ENCODE measurements at regions of chr12 and their contacts with region 1.

Region 1: DNA sequence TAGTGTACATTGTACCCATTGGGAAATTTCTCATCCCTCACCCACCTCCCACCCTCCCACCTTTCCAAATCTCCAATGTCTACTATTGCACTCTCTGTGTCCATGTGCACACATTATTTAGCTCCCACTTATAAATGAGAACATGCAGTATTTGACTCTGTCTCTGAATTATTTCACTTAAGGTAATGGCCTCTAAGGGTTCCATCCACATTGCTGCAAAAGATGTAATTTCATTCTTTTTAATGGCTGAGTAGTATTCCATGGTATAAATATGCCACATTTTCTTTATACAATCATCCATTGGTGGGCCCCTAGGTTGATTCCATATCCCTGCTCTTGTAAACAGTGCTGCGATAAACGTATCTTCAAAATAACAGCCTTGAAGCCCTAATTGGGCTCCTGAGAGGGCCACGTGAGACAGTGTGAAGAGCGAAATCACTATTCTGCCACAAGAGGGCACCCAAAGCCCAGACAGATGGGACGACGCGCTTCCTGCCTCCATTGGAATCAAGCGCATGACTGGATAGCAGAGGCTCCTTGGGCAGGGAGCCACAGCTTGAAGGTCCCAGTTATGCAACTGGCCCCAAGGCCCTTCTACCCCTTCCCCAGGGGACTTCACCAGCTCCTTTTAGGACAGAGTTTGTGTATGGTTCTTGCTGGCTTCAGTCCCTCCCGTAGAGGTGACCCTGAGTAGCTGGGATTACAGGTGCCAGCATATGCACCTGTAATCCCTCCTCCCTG is 21.3 kb upstream of the CD27 start:
- DNase-seq: peak; percentile 78
- H3K4me3 ChIP-seq: no peak overlapping the region
- H3K27ac ChIP-seq: no peak overlapping the region
- H3K4me1 ChIP-seq: no peaks in the 10 kb centered on the region
- H3K27me3 ChIP-seq: no peaks in the 10 kb centered on the region
- CTCF ChIP-seq: peak; percentile 87 to 90

Region 2: DNA sequence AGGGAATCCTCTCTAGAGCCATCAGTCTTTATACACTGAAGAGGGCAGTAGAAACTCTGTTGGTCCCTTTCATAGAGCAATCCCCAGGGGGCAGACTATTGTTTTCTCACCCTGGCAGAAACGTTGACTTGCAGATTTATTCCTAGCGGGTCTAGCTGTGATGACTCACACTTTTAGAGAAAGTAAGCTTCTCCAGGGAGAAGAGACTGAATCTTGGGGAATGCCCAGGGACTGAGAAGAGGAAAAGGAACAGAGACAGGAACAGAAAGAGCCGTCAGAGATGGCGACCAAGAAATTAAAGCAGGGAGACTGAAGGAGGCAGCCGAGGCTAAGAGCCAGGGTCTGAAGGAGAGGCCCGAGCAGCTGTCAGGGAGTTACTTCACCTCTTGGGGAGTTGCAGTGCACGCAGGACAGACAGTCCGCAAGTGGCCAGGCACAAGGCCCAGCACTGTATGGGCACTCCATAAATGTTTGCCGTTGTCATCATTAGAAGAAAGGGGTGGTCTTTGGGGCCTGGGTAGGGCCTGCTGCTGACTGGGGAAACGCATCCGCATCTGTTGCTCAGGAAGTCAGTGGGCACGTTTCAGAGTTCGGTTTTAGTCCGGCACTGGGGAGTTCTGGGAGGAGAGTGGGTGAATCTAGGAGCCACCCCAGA is 100.0 kb before region 1 on chr12:
- CTCF ChIA-PET with region 1: no interaction called
- dilution Hi-C with region 1: no loop called
- in situ Hi-C with region 1: no loop called
- intact Hi-C with region 1: loop called (anchors 1 kb)
- DNase-seq: peak; percentile 89
- H3K4me3 ChIP-seq: no peak overlapping the region
- H3K27ac ChIP-seq: peak overlapping the region; percentile 5
- H3K4me1 ChIP-seq: peaks cover 16% of the 10 kb centered on the region
- H3K27me3 ChIP-seq: no peaks in the 10 kb centered on the region
- CTCF ChIP-seq: peak; percentile 46 to 59

Region 3: GRCh38 chr12:6493497-6494257 is 70.2 kb after region 1 on chr12 and contains the start of gene NCAPD2:
- CTCF ChIA-PET with region 1: no interaction called
- dilution Hi-C with region 1: no loop called
- in situ Hi-C with region 1: no loop called
- intact Hi-C with region 1: loop called (anchors 2 kb)
- DNase-seq: peak; percentile 97
- H3K4me3 ChIP-seq: peak within 1 kb of the TSS; percentile 90 to 95 (median 94)
- H3K27ac ChIP-seq: peak within 1 kb of the TSS; percentile 93
- H3K4me1 ChIP-seq: peaks cover 27% of the 10 kb centered on the region
- H3K27me3 ChIP-seq: no peaks in the 10 kb centered on the region
- CTCF ChIP-seq: peak; percentile 7 to 12
- total RNA-seq, gene NCAPD2: 17.8 to 53.7 TPM

Region 4: GRCh38 chr12:6540181-6540877 is 116.9 kb after region 1 on chr12:
- CTCF ChIA-PET with region 1: no interaction called
- dilution Hi-C with region 1: no loop called
- in situ Hi-C with region 1: loop called (anchors 10 kb)
- intact Hi-C with region 1: loop called (anchors 1 kb)
- DNase-seq: peak; percentile 97
- H3K4me3 ChIP-seq: peak overlapping the region in 2 of 3 experiments; percentile 23 to 31
- H3K27ac ChIP-seq: peak overlapping the region; percentile 64
- H3K4me1 ChIP-seq: peaks cover 43% of the 10 kb centered on the region
- H3K27me3 ChIP-seq: no peaks in the 10 kb centered on the region
- CTCF ChIP-seq: peak in 1 of 2 donors; percentile 5

Region 5: GRCh38 chr12:6613776-6614512 is 190.5 kb after region 1 on chr12:
- CTCF ChIA-PET with region 1: no interaction called
- dilution Hi-C with region 1: no loop called
- in situ Hi-C with region 1: no loop called
- intact Hi-C with region 1: loop called (anchors 5 kb)
- DNase-seq: peak; percentile 65
- H3K4me3 ChIP-seq: no peak overlapping the region
- H3K27ac ChIP-seq: no peak overlapping the region
- H3K4me1 ChIP-seq: peaks cover 17% of the 10 kb centered on the region
- H3K27me3 ChIP-seq: no peaks in the 10 kb centered on the region
- CTCF ChIP-seq: no peak

Region 6: DNA sequence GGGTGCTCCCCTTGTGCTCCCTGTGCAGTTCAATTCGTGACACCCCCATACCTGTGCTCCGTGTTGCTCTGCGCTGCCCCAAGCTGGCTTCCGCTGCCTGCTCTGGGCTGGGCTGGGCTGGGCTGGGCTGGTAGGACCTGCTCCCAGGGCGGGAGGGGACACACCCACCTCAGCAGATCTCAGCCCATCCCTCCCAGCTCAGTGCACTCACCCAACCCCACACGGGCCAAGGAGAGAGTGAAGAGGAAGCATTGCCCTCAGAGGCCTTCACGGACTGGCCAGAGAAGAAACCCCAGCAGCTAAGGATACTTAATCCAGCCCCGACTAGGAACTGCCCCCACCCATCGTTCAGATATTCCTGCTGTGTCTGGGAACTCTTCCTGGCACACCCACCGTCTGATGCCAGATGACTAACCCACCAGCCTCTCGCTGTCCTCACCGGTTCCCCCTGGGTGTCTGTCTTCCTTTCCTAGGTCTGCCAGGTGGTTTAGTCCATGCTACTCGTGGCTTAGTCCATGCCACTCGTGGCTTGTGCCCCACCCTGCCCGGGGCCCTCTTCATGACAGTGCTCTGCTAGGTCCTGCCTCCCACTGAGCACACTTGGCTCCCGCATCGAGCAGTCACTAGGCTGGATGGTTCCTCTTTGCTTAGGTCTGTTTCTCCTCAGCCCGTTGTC is 212.6 kb after region 1 on chr12 and contains the start of gene LPAR5:
- CTCF ChIA-PET with region 1: no interaction called
- dilution Hi-C with region 1: no loop called
- in situ Hi-C with region 1: no loop called
- intact Hi-C with region 1: no loop called
- DNase-seq: peak; percentile 69
- H3K4me3 ChIP-seq: no peak within 1 kb of the TSS
- H3K27ac ChIP-seq: no peak within 1 kb of the TSS
- H3K4me1 ChIP-seq: peaks cover 5% of the 10 kb centered on the region
- H3K27me3 ChIP-seq: no peaks in the 10 kb centered on the region
- CTCF ChIP-seq: no peak
- total RNA-seq, gene LPAR5: 0.14 TPM in 1 of 2 donors, not detected in the other

Measured in mammary epithelial cell (primary cell).